ENCODE measurements at regions of chr5 and their contacts with region 1.

Region 1: GRCh38 chr5:142432369-142432863 is 107.6 kb upstream of the SPRY4 start:
- DNase-seq: peak; percentile 55
- ATAC-seq: peak; percentile 73
- H3K4me3 Mint-ChIP-seq: peak overlapping the region; percentile 12
- H3K27ac Mint-ChIP-seq: peak overlapping the region; percentile 79
- H3K4me1 Mint-ChIP-seq: peaks cover 39% of the 10 kb centered on the region
- H3K27me3 Mint-ChIP-seq: no peaks in the 10 kb centered on the region

Region 2: DNA sequence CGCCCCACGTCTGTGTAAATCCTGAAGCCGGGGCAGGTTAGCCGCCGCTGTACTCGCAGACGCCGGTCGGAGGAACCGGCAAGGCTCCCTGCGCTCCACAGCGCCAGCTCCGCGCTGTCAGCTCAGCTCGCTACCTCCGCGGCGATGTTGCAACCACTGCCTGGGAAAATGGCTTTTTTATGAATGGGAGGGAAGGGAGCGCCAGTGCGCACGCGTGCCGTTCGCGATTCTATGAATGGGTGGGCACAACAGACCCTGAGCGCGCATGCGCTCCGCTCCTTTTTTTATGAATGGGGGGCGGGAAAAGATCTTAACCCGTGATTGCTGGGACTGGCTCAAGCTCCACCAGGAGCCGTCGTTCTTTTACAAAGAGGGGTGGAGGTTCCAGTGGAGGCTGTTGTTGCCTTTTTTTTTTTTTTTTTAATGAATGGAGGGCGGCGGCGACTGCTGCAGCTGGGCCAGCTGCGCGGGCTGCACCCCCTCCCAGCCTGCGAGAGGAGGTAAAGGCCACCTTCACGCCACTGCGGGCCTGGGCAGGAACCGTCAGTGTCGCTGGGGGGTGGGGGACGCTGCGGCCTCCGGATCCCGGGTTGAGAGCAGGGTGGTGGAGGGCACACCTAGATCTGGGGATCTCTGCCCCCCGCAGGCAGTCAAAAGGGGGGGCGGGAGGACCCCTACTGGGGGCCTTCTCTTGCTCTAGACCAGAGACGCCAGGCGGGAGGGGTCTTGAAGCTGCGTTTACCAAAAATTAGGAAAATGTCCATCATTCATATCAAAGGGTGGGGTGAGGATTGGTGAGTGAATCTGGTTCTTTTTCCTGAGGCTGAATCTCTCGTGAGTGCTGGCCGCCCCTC is 107.3 kb before region 1 on chr5 and contains the start of gene SPRY4:
- CTCF ChIA-PET with region 1: no interaction called
- POLR2A ChIA-PET with region 1: interaction called, 3 read pairs
- intact Hi-C with region 1: loop called in 1 of 2 experiments (anchors 10 kb)
- DNase-seq: peak; percentile 95
- ATAC-seq: peak; percentile 89
- H3K4me3 Mint-ChIP-seq: peak within 1 kb of the TSS; percentile 77
- H3K27ac Mint-ChIP-seq: peak within 1 kb of the TSS; percentile 79
- H3K4me1 Mint-ChIP-seq: peaks cover 37% of the 10 kb centered on the region
- H3K27me3 Mint-ChIP-seq: peaks cover 36% of the 10 kb centered on the region
- total RNA-seq, gene SPRY4: 0.93 to 0.98 TPM

Region 3: DNA sequence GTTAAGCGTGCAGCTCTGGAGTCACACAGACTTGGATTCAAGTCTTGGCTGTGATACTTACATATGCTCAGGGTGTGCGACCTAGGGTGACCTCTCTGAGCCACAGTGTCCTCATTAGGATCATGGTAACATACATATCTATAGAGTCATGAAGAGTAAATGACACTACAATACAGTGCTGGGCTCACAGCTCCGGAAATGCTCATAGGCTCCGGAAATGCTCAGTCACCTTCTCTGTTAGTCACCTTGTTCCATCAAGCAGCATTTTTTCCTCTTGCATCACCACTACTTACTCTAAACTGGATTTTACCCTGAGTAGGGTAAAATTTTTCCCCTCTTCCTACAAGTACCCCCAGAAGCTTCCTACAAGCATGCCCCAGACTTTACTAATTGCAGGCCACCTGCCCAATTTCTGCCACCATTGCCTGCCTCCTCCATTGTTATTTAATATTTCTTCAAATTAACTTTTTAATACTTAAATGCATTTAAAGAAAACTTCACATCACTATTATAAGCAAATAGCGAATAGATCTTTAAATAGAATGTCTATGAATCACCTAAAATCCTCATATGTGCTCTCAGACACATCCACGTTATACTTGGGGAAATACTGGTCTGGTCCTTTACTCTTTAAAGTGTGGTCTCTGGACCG is 40.0 kb after region 1 on chr5:
- CTCF ChIA-PET with region 1: no interaction called
- POLR2A ChIA-PET with region 1: no interaction called
- intact Hi-C with region 1: loop called in 1 of 2 experiments (anchors 2 kb)
- DNase-seq: peak; percentile 78
- ATAC-seq: peak; percentile 100
- H3K4me3 Mint-ChIP-seq: no peak overlapping the region
- H3K27ac Mint-ChIP-seq: peak overlapping the region; percentile 92
- H3K4me1 Mint-ChIP-seq: peaks cover 21% of the 10 kb centered on the region
- H3K27me3 Mint-ChIP-seq: no peaks in the 10 kb centered on the region